H1 (cell line): ENCODE measurements at regions of chr10 and their contacts with region 1.

Region 1: GRCh38 chr10:60798031-60798430 is 19.8 kb downstream of the CDK1 start:
- DNase-seq: no peak
- H3K4me3 ChIP-seq: no peak overlapping the region
- H3K27ac ChIP-seq: no peak overlapping the region
- H3K4me1 ChIP-seq: no peaks in the 10 kb centered on the region
- H3K27me3 ChIP-seq: no peaks in the 10 kb centered on the region
- CTCF ChIP-seq: no peak
- EP300 ChIP-seq: no peak
- POLR2A ChIP-seq: no peak
- RAD21 ChIP-seq: no peak

Region 2: GRCh38 chr10:60784641-60785040 is 13.4 kb before region 1 on chr10:
- CTCF ChIA-PET with region 1: interaction called, 3 read pairs
- POLR2A ChIA-PET with region 1: interaction called, 11 read pairs
- DNase-seq: no peak
- H3K4me3 ChIP-seq: no peak overlapping the region
- H3K27ac ChIP-seq: no peak overlapping the region
- H3K4me1 ChIP-seq: peaks cover 0 to 6% (median under 1%) of the 10 kb centered on the region in 4 experiments; a peak in 2 of 7 replicates
- H3K27me3 ChIP-seq: no peaks in the 10 kb centered on the region
- CTCF ChIP-seq: no peak
- EP300 ChIP-seq: no peak
- POLR2A ChIP-seq: no peak
- RAD21 ChIP-seq: no peak